Panc1 (cell line): ENCODE measurements at regions of chr10 and their contacts with region 1.

Region 1: DNA sequence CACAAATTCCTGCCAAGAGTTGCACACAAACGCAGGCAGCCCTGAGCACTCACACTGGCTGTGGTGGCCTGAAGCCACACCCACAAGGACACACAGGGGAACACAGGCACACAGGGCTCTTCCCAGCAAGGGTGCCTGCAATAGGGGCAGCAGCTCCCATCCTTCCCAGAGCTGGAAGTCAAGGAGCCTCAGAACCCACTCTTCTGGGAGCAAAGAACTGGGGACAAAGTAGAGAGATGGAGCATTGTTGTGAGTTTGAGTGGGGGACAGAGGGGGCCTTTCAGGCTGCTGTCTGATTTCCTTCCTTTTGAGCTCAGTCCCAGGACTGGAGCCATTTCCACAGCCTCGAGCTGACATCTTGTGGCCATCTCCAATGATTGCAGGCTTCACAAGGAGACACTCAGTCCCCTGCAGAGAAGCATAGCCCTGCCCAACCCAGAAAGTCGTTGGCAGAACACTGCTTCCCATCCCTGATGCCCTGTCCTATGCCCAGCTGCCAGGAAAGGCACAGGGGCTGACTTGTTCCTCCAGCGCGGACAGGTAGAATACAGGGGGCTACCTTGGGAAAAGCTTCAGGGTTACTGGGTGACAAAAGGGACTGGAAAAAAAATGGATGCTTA is 34.4 kb upstream of the SLF2 start:
- DNase-seq: peak; percentile 48
- ATAC-seq: peak; percentile 95
- H3K4me3 ChIP-seq: no peak overlapping the region
- H3K27ac ChIP-seq: no peak overlapping the region
- H3K4me1 ChIP-seq: no peaks in the 10 kb centered on the region
- H3K27me3 ChIP-seq: no peaks in the 10 kb centered on the region
- CTCF ChIP-seq: peak; percentile 90

Region 2: DNA sequence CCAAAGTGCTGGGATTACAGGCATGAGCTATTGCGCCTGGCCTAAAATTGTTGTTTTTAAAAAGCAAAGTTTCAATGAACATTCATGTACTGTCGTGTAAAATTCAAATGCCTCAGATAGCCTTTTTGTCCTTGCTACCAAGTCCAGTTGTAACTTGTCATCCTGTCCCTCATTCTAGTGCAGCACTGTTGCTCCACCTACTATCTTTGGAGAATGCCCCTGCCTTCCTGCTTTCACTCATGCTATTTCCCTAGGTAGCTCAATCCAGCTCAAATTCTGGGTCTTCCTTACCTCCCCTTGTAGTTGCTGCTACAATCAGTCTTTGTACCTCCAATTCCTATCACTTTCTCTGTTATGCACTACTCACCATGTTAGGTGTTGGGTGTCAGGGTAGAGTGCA is 793.6 kb before region 1 on chr10:
- CTCF ChIA-PET with region 1: no interaction called
- POLR2A ChIA-PET with region 1: no interaction called
- in situ Hi-C with region 1: no loop called
- intact Hi-C with region 1: no loop called
- DNase-seq: no peak
- ATAC-seq: no peak
- H3K4me3 ChIP-seq: no peak overlapping the region
- H3K27ac ChIP-seq: no peak overlapping the region
- H3K4me1 ChIP-seq: no peaks in the 10 kb centered on the region
- H3K27me3 ChIP-seq: 0 out of 2 replicates have a peak, but pooled peaks cover 2% of the 10 kb centered on the region
- CTCF ChIP-seq: no peak

Region 3: GRCh38 chr10:100518761-100519241 is 359.6 kb before region 1 on chr10:
- CTCF ChIA-PET with region 1: interaction called, 11 read pairs
- POLR2A ChIA-PET with region 1: interaction called, 12 read pairs
- in situ Hi-C with region 1: no loop called
- intact Hi-C with region 1: no loop called
- DNase-seq: peak; percentile 48
- ATAC-seq: peak; percentile 81
- H3K4me3 ChIP-seq: no peak overlapping the region
- H3K27ac ChIP-seq: no peak overlapping the region
- H3K4me1 ChIP-seq: no peaks in the 10 kb centered on the region
- H3K27me3 ChIP-seq: no peaks in the 10 kb centered on the region
- CTCF ChIP-seq: peak; percentile 90

Region 4: DNA sequence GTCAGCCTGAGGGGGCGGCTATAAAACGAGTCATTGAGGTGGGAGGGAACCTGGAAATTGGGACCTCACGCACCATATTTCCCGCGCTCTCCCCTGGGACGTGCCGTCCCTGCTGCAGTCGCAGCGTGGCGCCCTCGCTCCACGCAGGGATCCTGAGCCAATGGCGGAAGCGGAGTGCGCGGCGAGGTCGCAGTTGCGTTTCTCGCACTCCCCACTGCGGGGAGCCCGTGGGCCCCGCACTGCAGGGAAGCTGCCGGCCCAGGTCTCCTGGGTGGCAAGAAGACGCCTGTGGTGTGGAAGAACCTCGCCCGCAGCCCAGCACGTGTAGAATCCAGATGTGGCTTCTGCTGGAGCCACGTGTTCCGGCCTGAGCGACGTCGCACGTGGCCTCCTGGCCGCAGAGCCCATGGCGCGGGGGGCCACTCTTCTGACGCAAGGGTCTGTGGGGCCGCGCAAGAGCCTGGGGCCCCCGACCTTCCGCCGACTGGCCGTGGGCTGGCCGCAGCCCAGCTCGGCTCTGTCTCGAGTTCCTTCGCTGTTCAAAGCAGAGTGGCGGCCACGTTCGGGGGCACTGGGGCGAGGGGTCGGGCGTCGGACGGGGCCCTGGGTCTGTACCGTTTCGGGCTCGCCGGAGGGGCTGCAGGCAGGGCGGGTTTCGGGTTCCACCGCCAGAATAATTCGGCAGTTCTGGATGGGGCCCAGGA is 316.2 kb before region 1 on chr10:
- CTCF ChIA-PET with region 1: interaction called, 39 read pairs
- POLR2A ChIA-PET with region 1: no interaction called
- in situ Hi-C with region 1: no loop called
- intact Hi-C with region 1: loop called (anchors 2 kb)
- DNase-seq: peak; percentile 30
- ATAC-seq: peak; percentile 87
- H3K4me3 ChIP-seq: no peak overlapping the region
- H3K27ac ChIP-seq: no peak overlapping the region
- H3K4me1 ChIP-seq: peaks cover 5% of the 10 kb centered on the region
- H3K27me3 ChIP-seq: no peaks in the 10 kb centered on the region
- CTCF ChIP-seq: peak; percentile 100

Region 5: DNA sequence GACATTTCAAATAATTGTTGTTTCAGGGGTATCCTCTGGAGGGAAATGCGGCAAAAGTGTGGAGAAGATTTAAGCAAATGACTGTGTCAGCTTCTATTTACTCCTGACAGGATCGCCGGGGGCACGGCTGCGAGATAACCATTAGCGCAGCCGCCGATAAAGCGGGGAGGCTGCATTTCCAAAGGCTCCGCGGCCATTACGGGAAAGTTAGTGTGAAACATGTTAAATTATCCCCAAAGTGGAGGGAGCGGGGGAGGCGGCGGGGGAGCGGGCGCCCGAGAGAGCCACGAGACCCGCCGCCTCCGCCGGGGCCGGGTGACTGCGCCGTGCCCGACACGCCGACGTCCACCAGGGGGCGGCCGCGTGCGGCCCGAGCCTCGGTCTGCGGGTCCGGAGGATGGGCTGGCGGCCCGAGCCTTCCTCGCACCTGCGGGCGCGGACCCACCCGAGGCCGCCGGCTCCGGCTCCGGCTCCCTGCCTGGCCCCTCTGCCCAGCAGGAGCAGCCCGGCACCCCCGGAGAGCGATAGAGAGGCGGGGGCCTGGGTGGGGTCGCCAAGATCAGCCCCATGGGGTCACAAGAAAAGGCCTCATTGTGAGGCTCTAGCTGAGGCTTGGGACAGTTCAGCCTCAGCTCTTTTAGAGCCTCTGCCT is 207.4 kb before region 1 on chr10:
- CTCF ChIA-PET with region 1: no interaction called
- POLR2A ChIA-PET with region 1: no interaction called
- in situ Hi-C with region 1: no loop called
- intact Hi-C with region 1: loop called (anchors 10 kb)
- DNase-seq: no peak
- ATAC-seq: peak; percentile 92
- H3K4me3 ChIP-seq: peak overlapping the region; percentile 29 to 37
- H3K27ac ChIP-seq: no peak overlapping the region
- H3K4me1 ChIP-seq: peaks cover 3% of the 10 kb centered on the region; the same call in 1 of the 2 replicates
- H3K27me3 ChIP-seq: peaks cover 23% of the 10 kb centered on the region
- CTCF ChIP-seq: peak; percentile 100

Region 6: GRCh38 chr10:101273731-101274130 is 395.3 kb after region 1 on chr10:
- CTCF ChIA-PET with region 1: interaction called, 13 read pairs
- POLR2A ChIA-PET with region 1: no interaction called
- in situ Hi-C with region 1: no loop called
- intact Hi-C with region 1: no loop called
- DNase-seq: no peak
- ATAC-seq: no peak
- H3K4me3 ChIP-seq: no peak overlapping the region
- H3K27ac ChIP-seq: no peak overlapping the region
- H3K4me1 ChIP-seq: no peaks in the 10 kb centered on the region
- H3K27me3 ChIP-seq: no peaks in the 10 kb centered on the region
- CTCF ChIP-seq: no peak